PC-9 (cell line): ENCODE measurements at regions of chr20 and their contacts with region 1.

Region 1: DNA sequence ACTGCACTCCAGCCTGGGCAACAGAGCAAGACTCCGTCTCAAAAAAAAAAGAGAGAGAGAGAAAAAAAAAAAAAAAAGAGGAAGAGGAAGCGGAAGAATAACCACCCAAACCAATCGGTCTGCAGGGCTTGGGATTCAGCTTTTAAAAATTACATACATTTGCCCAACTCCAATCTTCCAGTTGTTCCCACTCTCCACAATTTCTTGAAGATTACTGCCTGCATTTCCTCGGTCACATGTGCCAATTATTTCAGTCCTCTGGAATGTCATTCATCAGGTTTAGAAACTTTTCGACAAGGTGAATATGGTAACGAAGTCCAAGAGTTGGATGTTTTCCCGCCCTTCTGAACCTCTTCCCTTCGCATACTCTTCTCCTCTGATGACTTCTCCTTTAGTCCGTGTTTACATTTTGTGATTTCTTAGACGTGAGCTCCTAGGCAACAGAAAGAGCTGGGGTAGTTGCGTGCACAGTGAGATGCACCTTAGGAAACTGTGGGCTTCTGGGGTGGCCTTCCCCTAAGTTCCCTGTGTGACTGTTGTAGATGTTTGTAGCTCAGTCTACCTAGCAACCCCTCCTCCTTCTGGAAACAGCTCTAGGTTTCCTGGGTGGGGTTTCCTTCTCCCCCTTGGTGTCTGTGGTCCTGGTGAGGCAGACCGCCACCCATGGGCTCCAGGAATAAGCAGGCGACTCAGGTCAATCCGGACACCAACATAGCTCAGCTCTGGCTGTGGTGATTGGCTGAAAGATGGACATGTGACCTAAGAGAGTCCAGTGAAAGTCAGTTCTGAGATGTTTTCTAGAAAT is 62.9 kb upstream of the NCOA3 start:
- DNase-seq: peak; percentile 67 to 94
- H3K4me3 ChIP-seq: 0 out of 2 replicates have a peak overlapping the region, but pooled peaks have one; percentile 1
- H3K27ac ChIP-seq: peak overlapping the region; percentile 78
- H3K4me1 ChIP-seq: peaks cover 58% of the 10 kb centered on the region
- H3K27me3 ChIP-seq: no peaks in the 10 kb centered on the region
- CTCF ChIP-seq: no peak

Region 2: GRCh38 chr20:47272893-47273590 is 165.7 kb before region 1 on chr20:
- CTCF ChIA-PET with region 1: no interaction called
- POLR2A ChIA-PET with region 1: no interaction called
- intact Hi-C with region 1: no loop called
- DNase-seq: peak; percentile 53 to 58
- H3K4me3 ChIP-seq: no peak overlapping the region
- H3K27ac ChIP-seq: no peak overlapping the region
- H3K4me1 ChIP-seq: peaks cover 40% of the 10 kb centered on the region
- H3K27me3 ChIP-seq: no peaks in the 10 kb centered on the region
- CTCF ChIP-seq: peak; percentile 97

Region 3: GRCh38 chr20:47392015-47392720 is 46.6 kb before region 1 on chr20:
- CTCF ChIA-PET with region 1: interaction called, 5 read pairs
- POLR2A ChIA-PET with region 1: interaction called, 6 read pairs
- intact Hi-C with region 1: loop called (anchors 1 kb)
- DNase-seq: peak; percentile 80 to 100
- H3K4me3 ChIP-seq: peak overlapping the region; percentile 33; the same call in 1 of the 2 replicates
- H3K27ac ChIP-seq: peak overlapping the region; percentile 99
- H3K4me1 ChIP-seq: peaks cover 64% of the 10 kb centered on the region
- H3K27me3 ChIP-seq: no peaks in the 10 kb centered on the region
- CTCF ChIP-seq: no peak

Region 4: DNA sequence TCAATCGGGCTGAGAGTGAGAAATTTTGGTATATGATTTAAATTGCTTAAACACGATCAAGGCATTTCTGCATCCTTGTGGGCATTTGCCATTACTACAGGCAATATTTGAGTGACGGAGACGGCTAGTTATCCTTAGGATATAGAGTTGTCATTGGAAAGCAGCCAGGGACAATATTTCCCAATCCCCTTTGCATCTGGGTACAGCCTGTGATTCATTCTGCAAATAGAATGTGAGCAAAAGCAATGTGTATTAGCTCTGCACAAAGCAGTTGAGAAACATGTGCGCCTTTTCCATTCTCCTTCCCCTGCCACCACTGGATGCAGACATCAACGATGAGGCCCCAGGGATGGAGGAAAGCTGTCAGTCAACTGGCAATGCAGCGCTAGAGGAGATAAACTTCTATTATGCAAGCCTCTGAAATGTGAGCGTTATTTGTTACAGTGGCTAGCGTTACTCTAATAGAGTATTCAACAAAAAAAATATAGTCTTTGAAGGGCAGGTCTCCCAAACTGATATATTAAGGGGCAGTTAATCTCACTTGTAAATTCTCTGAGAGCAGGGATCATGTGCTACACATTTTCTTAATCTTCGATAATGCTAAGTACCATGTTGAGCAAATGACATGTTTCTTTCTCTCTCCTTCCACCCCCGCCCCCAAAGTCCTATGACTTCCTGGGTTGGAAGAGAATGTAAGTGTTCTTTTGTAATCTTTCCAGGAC is 25.8 kb after region 1 on chr20:
- CTCF ChIA-PET with region 1: interaction called, 6 read pairs
- POLR2A ChIA-PET with region 1: no interaction called
- intact Hi-C with region 1: loop called (anchors 2 kb)
- DNase-seq: peak; percentile 79 to 99
- H3K4me3 ChIP-seq: no peak overlapping the region; the same call in 1 of the 2 replicates
- H3K27ac ChIP-seq: peak overlapping the region; percentile 73
- H3K4me1 ChIP-seq: peaks cover 29% of the 10 kb centered on the region
- H3K27me3 ChIP-seq: no peaks in the 10 kb centered on the region
- CTCF ChIP-seq: peak; percentile 78

Region 5: GRCh38 chr20:47493175-47493962 is 54.6 kb after region 1 on chr20:
- CTCF ChIA-PET with region 1: no interaction called
- POLR2A ChIA-PET with region 1: no interaction called
- intact Hi-C with region 1: loop called (anchors 2 kb)
- DNase-seq: peak; percentile 89 to 94
- H3K4me3 ChIP-seq: peak overlapping the region; percentile 38
- H3K27ac ChIP-seq: peak overlapping the region; percentile 84
- H3K4me1 ChIP-seq: peaks cover 44% of the 10 kb centered on the region
- H3K27me3 ChIP-seq: no peaks in the 10 kb centered on the region
- CTCF ChIP-seq: no peak